ENCODE measurements at regions of chr9 and their contacts with region 1.

Region 1: GRCh38 chr9:87063871-87064270 is 116.6 kb upstream of the GAS1 start:
- DNase-seq: peak in 1 of 2 donors; percentile 78
- H3K4me3 ChIP-seq: no peak overlapping the region
- H3K27ac ChIP-seq: peak overlapping the region; percentile 43 to 58
- H3K4me1 ChIP-seq: peaks cover 4 to 15% of the 10 kb centered on the region in 2 donors
- H3K27me3 ChIP-seq: no peaks in the 10 kb centered on the region
- CTCF ChIP-seq: no peak

Region 2: DNA sequence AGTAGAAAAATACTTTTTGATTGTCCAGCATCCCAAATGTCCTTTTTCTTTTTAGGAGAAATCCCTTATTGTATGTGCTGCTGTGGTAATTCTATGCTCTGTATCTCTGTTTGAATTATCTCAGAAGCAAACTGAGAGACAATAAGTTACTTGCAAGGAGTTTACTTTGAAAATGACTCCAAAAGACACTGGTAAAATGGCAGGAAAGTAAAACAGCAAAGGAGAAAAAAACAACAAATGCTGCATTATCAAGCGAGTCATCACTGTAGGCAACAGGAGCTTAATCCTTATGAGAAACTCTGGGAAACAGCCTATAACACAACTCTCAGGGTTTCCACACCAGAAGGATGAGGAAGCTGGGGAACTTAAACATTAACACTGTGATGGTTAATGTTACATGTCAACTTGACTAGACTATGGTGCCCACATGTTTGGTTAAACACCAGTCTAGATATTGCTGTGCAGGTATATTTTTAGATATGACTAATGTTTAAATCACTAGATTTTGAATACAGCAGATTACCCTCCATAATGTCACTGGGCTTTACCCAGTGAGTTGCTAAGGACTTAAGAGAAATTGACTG is 24.0 kb before region 1 on chr9:
- intact Hi-C with region 1: loop called (anchors 1 kb)
- DNase-seq: no peak
- H3K4me3 ChIP-seq: no peak overlapping the region
- H3K27ac ChIP-seq: no peak overlapping the region
- H3K4me1 ChIP-seq: peaks cover 0 to 4% of the 10 kb centered on the region in 2 donors
- H3K27me3 ChIP-seq: no peaks in the 10 kb centered on the region
- CTCF ChIP-seq: no peak

Region 3: GRCh38 chr9:87148331-87149104 is 84.6 kb after region 1 on chr9:
- intact Hi-C with region 1: loop called (anchors 5 kb)
- DNase-seq: peak; percentile 49 to 95
- H3K4me3 ChIP-seq: peak overlapping the region; percentile 39 to 57
- H3K27ac ChIP-seq: peak overlapping the region; percentile 95 to 98
- H3K4me1 ChIP-seq: peaks cover 0 to 16% of the 10 kb centered on the region in 2 donors
- H3K27me3 ChIP-seq: no peaks in the 10 kb centered on the region
- CTCF ChIP-seq: peak in 1 of 3 experiments; percentile 40

Region 4: GRCh38 chr9:87198716-87199115 is 134.8 kb after region 1 on chr9:
- intact Hi-C with region 1: loop called (anchors 5 kb)
- DNase-seq: no peak
- H3K4me3 ChIP-seq: no peak overlapping the region
- H3K27ac ChIP-seq: peak overlapping the region in 1 of 2 donors; percentile 68
- H3K4me1 ChIP-seq: peaks cover 0 to 3% of the 10 kb centered on the region in 2 donors
- H3K27me3 ChIP-seq: no peaks in the 10 kb centered on the region
- CTCF ChIP-seq: no peak

Region 5: GRCh38 chr9:87280421-87280820 is 216.6 kb after region 1 on chr9:
- intact Hi-C with region 1: loop called (anchors 10 kb)
- DNase-seq: no peak
- H3K4me3 ChIP-seq: no peak overlapping the region
- H3K27ac ChIP-seq: no peak overlapping the region
- H3K4me1 ChIP-seq: peaks cover 0 to 13% of the 10 kb centered on the region in 2 donors
- H3K27me3 ChIP-seq: no peaks in the 10 kb centered on the region
- CTCF ChIP-seq: no peak

Measured in ascending aorta (tissue), 2 donors.